Dorsolateral prefrontal cortex (tissue), 120 donors: ENCODE measurements at regions of chr15 and their contacts with region 1.

Region 1: DNA sequence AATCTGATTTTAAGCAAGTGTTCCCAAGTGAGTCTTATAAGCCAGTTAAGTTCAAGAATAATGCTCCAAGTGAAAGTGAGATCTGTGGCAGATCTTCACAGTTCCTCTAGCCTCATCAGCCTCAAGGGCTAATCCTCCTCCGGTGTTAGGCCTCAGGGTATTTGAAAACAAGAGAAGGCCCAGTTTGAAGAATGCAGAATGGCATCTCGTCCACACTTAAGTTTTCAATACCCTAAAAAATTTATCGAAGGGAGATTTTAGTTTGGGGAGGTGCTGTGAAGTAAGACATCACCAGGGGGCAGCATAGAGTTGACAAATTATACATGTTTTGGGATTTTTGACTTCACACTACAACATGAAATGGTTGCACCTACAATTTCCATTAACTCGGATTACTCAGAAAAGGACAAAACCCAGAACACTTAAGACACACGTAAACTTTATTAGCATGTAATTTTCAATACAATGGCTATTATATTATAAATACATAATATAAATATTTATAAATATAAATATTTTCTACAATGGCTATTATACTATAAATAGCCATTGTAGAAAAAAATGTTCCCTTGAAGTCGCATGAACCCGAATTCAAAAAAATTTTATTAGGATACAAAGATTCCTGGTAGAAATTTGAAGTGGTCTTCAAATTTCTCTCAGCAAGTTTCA is 2.3 kb upstream of the TMEM266 start:
- DNase-seq: peak in 1 of 10 donors; percentile 62
- H3K4me3 ChIP-seq: peak overlapping the region in 37 of 59 donors; percentile 2 to 82 (median 35)
- H3K27ac ChIP-seq: peak overlapping the region in 1 of 59 donors; percentile 85
- H3K27me3 ChIP-seq: peaks cover 0 to 4% (median 0%) of the 10 kb centered on the region in 45 donors
- CTCF ChIP-seq: peak; percentile 56 to 91 (median 81)

Region 2: DNA sequence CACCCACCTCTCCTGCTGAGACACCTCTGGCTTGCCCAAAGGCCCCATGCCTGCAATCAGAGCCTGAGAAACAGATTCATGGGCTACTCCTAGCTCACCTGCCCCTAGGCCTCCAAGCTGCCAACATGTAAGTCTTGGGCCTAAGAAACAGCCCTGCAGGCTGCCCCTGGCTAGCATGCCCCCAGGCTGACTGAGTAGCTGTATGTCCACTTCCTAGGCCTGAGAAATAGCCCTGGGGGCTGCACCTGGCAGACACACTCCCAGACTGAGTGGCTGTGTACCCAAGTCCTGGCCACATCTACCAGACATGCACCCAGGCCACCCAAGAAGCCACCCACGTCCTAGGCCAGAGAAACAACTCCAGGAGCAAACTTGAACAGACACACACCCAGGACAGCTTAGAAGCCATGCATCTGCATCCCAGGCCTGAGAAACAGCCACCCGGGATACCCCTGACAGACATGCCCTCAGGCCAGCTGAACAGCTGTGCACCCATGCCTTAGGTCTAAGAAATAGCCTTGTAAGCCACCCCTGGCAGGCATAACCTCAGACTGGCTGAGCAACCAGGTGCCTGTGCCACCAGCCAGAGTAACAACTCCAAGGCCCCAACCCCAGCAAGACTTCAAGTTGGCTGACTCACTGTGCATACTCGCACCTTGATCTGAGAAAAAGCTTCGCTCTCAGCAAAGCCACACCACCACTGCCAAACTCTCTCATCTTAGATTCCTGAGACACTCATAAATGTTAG is 33.3 kb before region 1 on chr15:
- intact Hi-C with region 1: no loop called
- DNase-seq: no peak
- H3K4me3 ChIP-seq: no peak overlapping the region
- H3K27ac ChIP-seq: no peak overlapping the region
- H3K27me3 ChIP-seq: peaks cover 0 to 4% (median 0%) of the 10 kb centered on the region in 45 donors
- CTCF ChIP-seq: no peak

Region 3: GRCh38 chr15:76139368-76140073 is 82.1 kb after region 1 on chr15:
- intact Hi-C with region 1: loop called (anchors 2 kb)
- DNase-seq: peak in 8 of 10 donors; percentile 58 to 76 (median 70)
- H3K4me3 ChIP-seq: peak overlapping the region in 6 of 59 donors; percentile 2 to 16 (median 8)
- H3K27ac ChIP-seq: peak overlapping the region in 11 of 59 donors; percentile 0 to 91 (median 12)
- H3K27me3 ChIP-seq: no peaks in the 10 kb centered on the region
- CTCF ChIP-seq: peak; percentile 76 to 95 (median 87)

Region 4: GRCh38 chr15:76150971-76151598 is 93.6 kb after region 1 on chr15:
- intact Hi-C with region 1: loop called in 1 of 2 experiments (anchors 5 kb)
- DNase-seq: peak; percentile 58 to 96 (median 78)
- H3K4me3 ChIP-seq: peak overlapping the region in 9 of 59 donors; percentile 2 to 20 (median 8)
- H3K27ac ChIP-seq: peak overlapping the region in 18 of 59 donors; percentile 9 to 80 (median 28)
- H3K27me3 ChIP-seq: peaks cover 0 to 5% (median 0%) of the 10 kb centered on the region in 45 donors
- CTCF ChIP-seq: peak; percentile 45 to 94 (median 85)